K562 (cell line): ENCODE measurements at regions of chr18 and their contacts with region 1.

Region 1: DNA sequence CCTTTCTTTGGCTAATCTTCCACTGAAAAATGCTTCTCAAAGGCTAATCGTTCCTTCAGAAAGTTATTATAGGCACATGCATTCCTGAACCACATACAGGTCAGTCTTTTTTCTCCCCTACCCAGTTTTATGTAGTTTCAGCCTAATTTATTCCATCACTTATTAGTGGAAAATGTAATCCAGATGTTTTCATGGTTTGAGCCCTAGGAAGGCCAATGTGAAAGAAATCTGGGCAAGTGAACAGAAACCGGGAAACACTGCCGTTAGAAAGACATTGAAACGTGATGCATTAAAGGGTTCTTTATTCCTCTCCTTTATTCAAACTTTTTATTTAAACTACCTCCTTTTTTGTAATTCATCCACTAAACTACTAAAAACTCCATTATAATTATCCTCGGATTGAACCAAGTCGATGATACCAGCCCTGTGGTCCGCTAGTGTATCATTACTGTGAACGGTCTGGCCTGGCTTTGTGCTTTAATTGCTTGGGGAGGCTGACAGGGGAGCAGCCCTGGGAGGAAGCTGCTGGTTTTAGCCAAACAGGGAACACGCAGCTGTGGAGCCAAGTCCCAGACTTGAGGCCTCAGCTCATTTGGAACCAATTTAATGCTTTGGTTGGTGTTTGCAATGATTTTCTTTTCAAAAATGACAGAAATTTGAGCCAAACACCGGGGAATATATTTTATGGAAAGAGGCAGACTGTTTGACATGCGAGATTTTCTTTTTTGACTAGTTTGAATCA is 149.2 kb downstream of the ARHGAP28 start:
- DNase-seq: no peak
- ATAC-seq: peak; percentile 58
- H3K4me3 ChIP-seq: no peak overlapping the region
- H3K27ac ChIP-seq: no peak overlapping the region
- H3K4me1 ChIP-seq: no peaks in the 10 kb centered on the region
- H3K27me3 ChIP-seq: peaks cover 0 to 10% of the 10 kb centered on the region in 2 experiments; a peak in 1 of 5 replicates
- CTCF ChIP-seq: no peak
- EP300 ChIP-seq: no peak
- POLR2A ChIP-seq: no peak
- RAD21 ChIP-seq: no peak

Region 2: GRCh38 chr18:6543330-6543908 is 335.3 kb before region 1 on chr18:
- CTCF ChIA-PET with region 1: interaction called, 4 read pairs
- POLR2A ChIA-PET with region 1: no interaction called
- in situ Hi-C with region 1: loop called (anchors 10 kb)
- intact Hi-C with region 1: loop called (anchors 5 kb)
- DNase-seq: peak in 3 of 4 experiments; percentile 18 to 25 (median 19)
- ATAC-seq: peak; percentile 55
- H3K4me3 ChIP-seq: no peak overlapping the region
- H3K27ac ChIP-seq: no peak overlapping the region
- H3K4me1 ChIP-seq: no peaks in the 10 kb centered on the region
- H3K27me3 ChIP-seq: no peaks in the 10 kb centered on the region
- CTCF ChIP-seq: peak; percentile 46 to 66 (median 53); a peak in 5 of 6 replicates
- EP300 ChIP-seq: no peak
- POLR2A ChIP-seq: no peak
- RAD21 ChIP-seq: peak; percentile 79 to 82

Region 3: DNA sequence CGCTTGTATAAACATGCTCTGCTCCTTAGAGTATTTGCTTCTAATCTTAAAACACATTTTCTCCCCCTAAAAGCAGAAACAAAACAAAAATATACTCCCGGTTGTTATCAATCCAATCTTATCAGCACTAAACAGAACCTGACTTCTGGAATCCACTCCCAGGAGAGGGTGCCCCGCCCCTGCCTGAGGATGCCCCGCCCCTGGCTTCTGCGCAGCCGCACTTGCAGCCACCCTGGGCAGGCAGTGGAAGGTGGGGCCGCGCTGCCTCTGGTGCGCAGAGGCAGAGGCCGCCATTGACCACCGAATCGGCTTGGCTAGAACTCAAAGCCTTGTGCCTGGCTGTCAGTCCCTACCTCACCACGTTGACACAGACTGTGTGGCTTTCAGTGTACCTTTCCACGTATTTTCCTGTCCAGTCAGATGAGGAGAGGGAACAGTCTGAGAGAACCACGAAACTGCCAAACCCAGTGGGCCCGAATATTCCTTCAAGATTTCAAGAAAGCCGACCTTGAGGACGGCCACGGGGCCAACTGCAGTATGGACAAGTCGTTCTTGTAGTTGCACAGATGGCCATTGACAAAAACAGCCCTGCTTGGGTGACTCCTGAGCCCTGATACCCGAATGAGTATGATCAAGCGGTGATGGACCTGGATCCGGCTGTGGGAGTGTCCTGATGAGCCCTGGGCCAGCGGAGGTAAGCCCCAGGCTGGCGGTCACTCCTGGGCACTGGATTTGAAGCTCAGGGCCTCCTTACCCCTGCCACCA is 195.4 kb before region 1 on chr18:
- CTCF ChIA-PET with region 1: no interaction called
- POLR2A ChIA-PET with region 1: no interaction called
- in situ Hi-C with region 1: no loop called
- intact Hi-C with region 1: loop called (anchors 2 kb)
- DNase-seq: peak; percentile 96 to 100 (median 98)
- ATAC-seq: peak; percentile 93
- H3K4me3 ChIP-seq: peak overlapping the region; percentile 52
- H3K27ac ChIP-seq: peak overlapping the region; percentile 87
- H3K4me1 ChIP-seq: peaks cover 9 to 31% of the 10 kb centered on the region in 2 experiments; a peak in 3 of 5 replicates
- H3K27me3 ChIP-seq: no peaks in the 10 kb centered on the region
- CTCF ChIP-seq: peak in 2 of 3 experiments; percentile 38 to 51; a peak in 4 of 6 replicates
- EP300 ChIP-seq: peak; percentile 84
- POLR2A ChIP-seq: peak; percentile 93
- RAD21 ChIP-seq: peak; percentile 58 to 61

Region 4: DNA sequence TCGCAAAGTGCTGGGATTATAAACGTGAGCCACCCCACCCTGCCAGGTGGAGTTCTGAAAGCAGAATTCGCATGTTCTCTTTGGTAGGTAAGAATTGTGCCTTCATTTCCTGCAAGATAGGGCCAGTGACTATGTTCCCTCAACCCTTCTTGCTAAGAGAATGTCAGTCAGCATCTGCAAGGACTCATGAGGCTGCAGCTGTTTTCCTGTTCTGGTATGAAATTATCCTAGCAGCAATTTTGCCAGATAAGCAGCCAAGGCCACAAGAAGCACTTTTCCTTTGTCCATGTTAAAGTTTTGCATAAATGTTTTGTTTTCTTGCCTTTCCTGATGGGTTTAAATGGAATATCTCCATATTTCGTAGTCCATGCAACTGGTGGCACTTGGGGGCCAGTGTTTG is 156.0 kb before region 1 on chr18:
- CTCF ChIA-PET with region 1: no interaction called
- POLR2A ChIA-PET with region 1: no interaction called
- in situ Hi-C with region 1: no loop called
- intact Hi-C with region 1: no loop called
- DNase-seq: no peak
- ATAC-seq: no peak
- H3K4me3 ChIP-seq: no peak overlapping the region
- H3K27ac ChIP-seq: no peak overlapping the region
- H3K4me1 ChIP-seq: no peaks in the 10 kb centered on the region
- H3K27me3 ChIP-seq: no peaks in the 10 kb centered on the region
- CTCF ChIP-seq: no peak
- EP300 ChIP-seq: no peak
- POLR2A ChIP-seq: no peak
- RAD21 ChIP-seq: no peak

Region 5: DNA sequence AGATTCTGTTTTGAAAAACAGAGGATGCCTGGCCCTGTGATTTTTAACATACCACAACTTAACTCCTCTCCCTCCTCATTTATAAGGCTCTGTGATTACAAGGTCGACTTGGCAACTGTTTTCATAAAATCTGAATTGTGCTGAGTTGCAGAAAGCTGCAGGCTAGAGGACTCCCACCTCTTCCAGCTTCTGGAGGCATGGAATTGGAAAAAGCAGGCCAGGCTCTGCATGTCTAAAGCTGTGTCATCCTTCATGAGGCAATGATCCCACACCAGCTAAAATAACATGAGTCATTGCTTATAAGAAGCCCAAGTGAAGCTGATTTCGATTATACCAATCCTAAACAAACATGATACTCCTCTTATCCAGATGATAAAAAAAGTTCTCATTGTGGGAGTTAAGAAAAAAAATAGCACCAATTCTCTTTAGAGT is 137.5 kb before region 1 on chr18:
- CTCF ChIA-PET with region 1: no interaction called
- POLR2A ChIA-PET with region 1: no interaction called
- in situ Hi-C with region 1: no loop called
- intact Hi-C with region 1: no loop called
- DNase-seq: peak in 2 of 4 experiments; percentile 19 to 23
- ATAC-seq: peak; percentile 85
- H3K4me3 ChIP-seq: no peak overlapping the region
- H3K27ac ChIP-seq: no peak overlapping the region
- H3K4me1 ChIP-seq: peaks cover 0 to 8% of the 10 kb centered on the region in 2 experiments; a peak in 2 of 5 replicates
- H3K27me3 ChIP-seq: no peaks in the 10 kb centered on the region
- CTCF ChIP-seq: no peak
- EP300 ChIP-seq: no peak
- POLR2A ChIP-seq: no peak
- RAD21 ChIP-seq: no peak

Region 6: GRCh38 chr18:6785001-6785400 is 93.7 kb before region 1 on chr18:
- CTCF ChIA-PET with region 1: no interaction called
- POLR2A ChIA-PET with region 1: no interaction called
- in situ Hi-C with region 1: no loop called
- intact Hi-C with region 1: no loop called
- DNase-seq: no peak
- ATAC-seq: no peak
- H3K4me3 ChIP-seq: no peak overlapping the region
- H3K27ac ChIP-seq: no peak overlapping the region
- H3K4me1 ChIP-seq: peaks cover 3 to 4% of the 10 kb centered on the region in 2 experiments; a peak in 2 of 5 replicates
- H3K27me3 ChIP-seq: no peaks in the 10 kb centered on the region; a peak in 1 of 5 replicates
- CTCF ChIP-seq: no peak
- EP300 ChIP-seq: no peak
- POLR2A ChIP-seq: no peak
- RAD21 ChIP-seq: no peak

Region 7: GRCh38 chr18:6836331-6836730 is 42.4 kb before region 1 on chr18:
- CTCF ChIA-PET with region 1: no interaction called
- POLR2A ChIA-PET with region 1: no interaction called
- in situ Hi-C with region 1: no loop called
- intact Hi-C with region 1: no loop called
- DNase-seq: peak; percentile 21 to 66 (median 44)
- ATAC-seq: peak; percentile 97
- H3K4me3 ChIP-seq: no peak overlapping the region
- H3K27ac ChIP-seq: no peak overlapping the region
- H3K4me1 ChIP-seq: peaks cover 0 to 10% of the 10 kb centered on the region in 2 experiments; a peak in 2 of 5 replicates
- H3K27me3 ChIP-seq: no peaks in the 10 kb centered on the region; a peak in 1 of 5 replicates
- CTCF ChIP-seq: no peak
- EP300 ChIP-seq: peak; percentile 50; the same call in 1 of the 2 replicates
- POLR2A ChIP-seq: no peak
- RAD21 ChIP-seq: no peak